PC-9 (cell line): ENCODE measurements at regions of chr17 and their contacts with region 1.

Region 1: GRCh38 chr17:28661635-28662537 is at the starts of genes SDF2 and SUPT6H:
- DNase-seq: peak; percentile 79 to 84
- H3K4me3 ChIP-seq: peak within 1 kb of the TSS; percentile 80
- H3K27ac ChIP-seq: peak within 1 kb of the TSS; percentile 78
- H3K4me1 ChIP-seq: peaks cover 17% of the 10 kb centered on the region
- H3K27me3 ChIP-seq: no peaks in the 10 kb centered on the region
- CTCF ChIP-seq: no peak
- total RNA-seq, gene SDF2: 38.9 and 43.7 TPM in 2 replicates
- total RNA-seq, gene SUPT6H: 46.7 and 63.3 TPM in 2 replicates

Region 2: DNA sequence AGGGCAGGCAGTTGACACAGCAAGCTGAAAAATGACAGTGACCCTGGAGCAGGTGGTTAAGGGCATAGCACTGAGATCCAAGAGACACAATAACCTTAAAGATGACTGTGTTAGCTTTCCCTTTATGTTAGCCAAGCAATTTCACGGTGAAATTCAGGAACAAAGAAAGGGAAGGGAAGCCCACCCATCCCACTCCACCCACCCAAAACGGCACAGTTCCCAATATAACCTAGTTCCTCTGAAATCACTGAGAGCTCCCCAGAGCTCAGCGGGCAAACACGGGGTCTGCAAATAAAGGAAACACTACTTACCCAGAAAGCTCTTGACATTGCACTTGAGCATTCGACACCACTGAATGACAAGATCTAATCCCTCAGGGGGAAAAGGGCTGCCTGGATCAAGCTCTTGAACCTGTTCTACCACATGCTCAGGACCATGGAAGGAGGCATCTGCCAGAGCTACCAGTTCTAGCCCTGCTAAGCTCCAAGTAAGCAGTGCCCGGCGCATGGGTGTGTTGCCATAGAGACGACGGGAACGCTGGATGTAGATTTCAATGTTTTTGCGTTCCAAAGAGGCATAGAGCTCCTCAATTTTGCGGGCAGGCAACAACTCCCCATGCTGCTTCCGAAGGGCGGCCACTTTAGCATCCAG is 27.6 kb before region 1 on chr17:
- CTCF ChIA-PET with region 1: no interaction called
- POLR2A ChIA-PET with region 1: no interaction called
- intact Hi-C with region 1: no loop called
- DNase-seq: no peak
- H3K4me3 ChIP-seq: no peak overlapping the region
- H3K27ac ChIP-seq: no peak overlapping the region
- H3K4me1 ChIP-seq: no peaks in the 10 kb centered on the region
- H3K27me3 ChIP-seq: no peaks in the 10 kb centered on the region
- CTCF ChIP-seq: no peak

Region 3: GRCh38 chr17:28684963-28685362 is 23.1 kb after region 1 on chr17:
- CTCF ChIA-PET with region 1: no interaction called
- POLR2A ChIA-PET with region 1: interaction called, 10 read pairs
- intact Hi-C with region 1: no loop called
- DNase-seq: no peak
- H3K4me3 ChIP-seq: no peak overlapping the region
- H3K27ac ChIP-seq: no peak overlapping the region
- H3K4me1 ChIP-seq: no peaks in the 10 kb centered on the region
- H3K27me3 ChIP-seq: no peaks in the 10 kb centered on the region
- CTCF ChIP-seq: no peak

Region 4: DNA sequence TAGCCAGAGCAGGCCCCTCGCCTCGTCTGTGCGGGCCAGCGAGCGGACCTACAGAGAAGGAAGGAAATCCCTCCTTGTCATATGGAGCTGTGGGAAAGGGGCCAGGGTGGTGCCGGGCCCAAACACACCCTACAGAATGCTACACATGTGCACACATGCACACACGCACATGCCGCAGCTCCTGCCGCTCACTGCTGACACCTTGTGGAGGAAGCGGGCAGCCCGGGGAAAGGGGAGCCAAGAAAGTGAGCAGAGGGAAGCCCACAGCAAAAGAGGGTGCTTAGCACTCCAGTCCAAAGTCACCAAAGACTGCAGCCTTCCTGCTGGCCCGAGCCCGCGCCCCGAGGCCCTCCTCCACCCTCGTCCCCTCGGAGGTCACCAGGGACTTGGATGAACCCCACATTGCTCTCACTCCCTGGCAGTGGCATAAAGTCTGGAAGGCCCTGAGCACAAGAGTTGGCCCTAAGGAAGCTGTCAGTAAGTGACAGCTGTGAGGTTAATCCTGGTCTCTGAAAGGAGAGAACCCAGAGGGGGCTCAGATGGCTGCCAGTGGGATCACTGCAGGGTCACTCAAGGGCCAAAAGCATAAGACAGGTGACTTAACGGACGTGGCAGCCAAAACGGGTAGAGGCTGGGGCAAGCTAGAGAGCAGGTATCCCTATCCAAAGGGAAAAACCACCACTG is 450.1 kb after region 1 on chr17:
- CTCF ChIA-PET with region 1: no interaction called
- POLR2A ChIA-PET with region 1: no interaction called
- intact Hi-C with region 1: no loop called
- DNase-seq: peak in 1 of 2 experiments; percentile 41
- H3K4me3 ChIP-seq: no peak overlapping the region
- H3K27ac ChIP-seq: no peak overlapping the region
- H3K4me1 ChIP-seq: peaks cover 31% of the 10 kb centered on the region
- H3K27me3 ChIP-seq: no peaks in the 10 kb centered on the region
- CTCF ChIP-seq: peak; percentile 75